Activated CD4-positive, alpha-beta T cell treated with anti-CD3 and anti-CD28 coated beads for 36 hours (primary cell): ENCODE measurements at regions of chr1 and their contacts with region 1.

Region 1: DNA sequence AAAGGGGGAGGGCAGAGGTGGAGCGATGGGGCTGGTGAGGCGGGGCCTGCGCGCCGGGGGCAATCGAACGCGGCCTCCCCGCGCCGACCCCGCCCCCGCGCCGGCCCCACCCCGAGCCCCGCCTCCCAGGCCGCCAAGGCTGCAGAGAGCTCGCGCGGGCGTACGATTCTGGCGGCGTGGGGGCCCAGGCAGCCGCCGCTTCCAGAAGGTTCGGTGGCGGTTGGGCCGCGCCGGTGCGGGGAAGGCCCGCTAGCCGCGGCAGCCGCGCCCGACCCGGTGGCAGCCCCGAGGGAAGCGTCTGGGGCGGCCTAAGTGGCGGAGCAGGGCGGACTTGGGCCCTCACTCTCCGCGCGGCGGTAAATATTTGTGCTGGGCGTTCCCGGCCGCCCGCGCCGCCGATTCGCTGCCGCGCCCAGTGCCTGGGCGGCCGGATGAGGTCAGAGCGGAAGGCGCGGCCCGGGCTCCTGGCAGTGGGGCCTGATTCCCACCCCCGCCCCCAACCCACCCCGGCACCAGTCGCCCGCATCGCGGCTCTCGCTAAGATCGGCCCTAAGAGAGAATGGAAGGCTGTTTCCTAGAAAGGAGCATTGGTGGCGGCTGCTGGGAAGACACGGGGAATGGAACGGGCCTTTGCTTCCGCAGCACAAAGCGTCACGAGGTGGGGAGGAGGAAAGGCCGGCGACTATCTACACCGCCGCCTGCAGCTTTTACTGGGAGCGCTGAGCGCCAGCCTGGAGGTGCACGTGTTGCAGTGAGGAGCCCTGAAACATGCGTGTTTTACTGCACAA is at the start of gene ACOT7:
- DNase-seq: peak; percentile 97
- ATAC-seq: peak; percentile 91
- H3K4me3 Mint-ChIP-seq: peak within 1 kb of the TSS; percentile 83
- H3K27ac Mint-ChIP-seq: peak within 1 kb of the TSS; percentile 95
- H3K4me1 Mint-ChIP-seq: peaks cover 28% of the 10 kb centered on the region
- H3K27me3 Mint-ChIP-seq: no peaks in the 10 kb centered on the region
- total RNA-seq, gene ACOT7: 93.8 to 99.2 TPM

Region 2: DNA sequence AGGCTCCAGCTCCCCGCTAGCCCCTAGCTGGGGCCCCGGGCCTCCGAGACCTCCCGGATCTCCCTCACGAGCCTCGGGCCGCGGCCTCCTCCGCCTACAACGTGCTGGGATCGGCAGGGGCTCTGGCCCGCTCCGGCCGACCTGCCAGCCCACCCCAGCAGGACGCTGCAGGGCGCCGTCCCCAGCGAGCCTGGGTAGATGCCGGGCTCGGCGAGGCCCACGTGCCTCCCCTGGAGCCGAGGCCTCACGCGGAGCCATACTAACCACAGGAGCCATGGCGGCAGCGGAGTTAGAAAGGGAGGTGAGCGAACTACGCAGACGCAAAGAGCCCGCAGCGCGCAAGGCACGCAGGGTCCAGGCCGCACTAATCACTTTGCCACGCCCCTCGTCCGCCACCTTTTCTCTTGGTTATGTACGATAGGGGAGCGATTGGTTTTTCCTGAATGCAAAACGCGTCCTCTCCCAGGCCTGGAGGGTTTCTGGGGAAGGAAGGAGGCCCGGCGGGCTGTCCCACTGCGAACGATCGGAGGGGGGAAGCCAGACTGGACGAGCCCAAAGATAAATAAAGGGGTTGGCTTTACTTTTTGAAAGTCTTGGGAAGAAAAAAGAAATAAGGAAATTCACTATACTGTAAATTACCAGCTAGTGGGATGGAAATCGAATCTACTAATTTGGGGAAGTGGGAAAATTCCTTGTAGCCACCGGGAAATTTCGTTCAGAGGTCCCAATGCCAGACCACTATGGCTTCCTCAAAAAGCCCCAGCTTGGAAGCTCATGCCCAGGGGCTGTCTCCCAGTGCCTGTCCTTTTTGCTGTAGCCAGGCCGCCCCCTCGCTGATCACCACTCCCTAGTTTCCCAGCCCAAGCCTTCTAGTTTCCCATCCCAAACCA is 194.1 kb before region 1 on chr1 and contains the start of gene RPL22:
- CTCF ChIA-PET with region 1: no interaction called
- POLR2A ChIA-PET with region 1: no interaction called
- intact Hi-C with region 1: loop called in 1 of 2 experiments (anchors 1 kb)
- DNase-seq: peak; percentile 99
- ATAC-seq: peak; percentile 99
- H3K4me3 Mint-ChIP-seq: peak within 1 kb of the TSS; percentile 99
- H3K27ac Mint-ChIP-seq: peak within 1 kb of the TSS; percentile 96
- H3K4me1 Mint-ChIP-seq: peaks cover 39% of the 10 kb centered on the region
- H3K27me3 Mint-ChIP-seq: no peaks in the 10 kb centered on the region
- total RNA-seq, gene RPL22: 392 to 475 TPM

Region 3: GRCh38 chr1:6259491-6260425 is 133.8 kb before region 1 on chr1:
- CTCF ChIA-PET with region 1: no interaction called
- POLR2A ChIA-PET with region 1: no interaction called
- intact Hi-C with region 1: loop called in 1 of 2 experiments (anchors 1 kb)
- DNase-seq: peak; percentile 86
- ATAC-seq: peak; percentile 53
- H3K4me3 Mint-ChIP-seq: no peak overlapping the region
- H3K27ac Mint-ChIP-seq: no peak overlapping the region
- H3K4me1 Mint-ChIP-seq: peaks cover 3% of the 10 kb centered on the region
- H3K27me3 Mint-ChIP-seq: peaks cover 3% of the 10 kb centered on the region

Region 4: GRCh38 chr1:6365047-6365446 is 28.5 kb before region 1 on chr1:
- CTCF ChIA-PET with region 1: interaction called, 5 read pairs
- POLR2A ChIA-PET with region 1: no interaction called
- intact Hi-C with region 1: loop called in 1 of 2 experiments (anchors 1 kb)
- DNase-seq: peak; percentile 68
- ATAC-seq: peak; percentile 98
- H3K4me3 Mint-ChIP-seq: peak overlapping the region; percentile 1
- H3K27ac Mint-ChIP-seq: peak overlapping the region; percentile 64
- H3K4me1 Mint-ChIP-seq: peaks cover 38% of the 10 kb centered on the region
- H3K27me3 Mint-ChIP-seq: no peaks in the 10 kb centered on the region

Region 5: DNA sequence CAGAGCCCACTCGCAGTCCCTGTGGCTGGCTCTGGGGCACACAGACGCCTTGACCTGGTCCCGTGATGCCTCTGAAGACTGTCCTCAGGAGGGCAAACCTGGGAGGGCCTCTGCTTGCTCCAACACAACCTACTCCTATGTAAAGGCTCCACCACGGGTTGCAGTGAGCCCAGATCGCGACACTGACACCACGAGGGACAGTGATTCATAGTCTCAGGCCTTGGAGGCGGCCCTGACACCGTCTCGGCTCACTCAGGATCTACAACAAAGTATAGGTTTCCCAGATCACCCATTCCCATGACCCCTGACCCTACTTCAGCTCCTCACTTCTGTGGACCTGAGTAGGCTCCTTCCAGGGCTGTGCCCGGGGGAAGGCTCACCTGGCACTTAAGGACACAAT is 132.7 kb after region 1 on chr1:
- CTCF ChIA-PET with region 1: no interaction called
- POLR2A ChIA-PET with region 1: no interaction called
- intact Hi-C with region 1: no loop called
- DNase-seq: no peak
- ATAC-seq: no peak
- H3K4me3 Mint-ChIP-seq: no peak overlapping the region
- H3K27ac Mint-ChIP-seq: no peak overlapping the region
- H3K4me1 Mint-ChIP-seq: no peaks in the 10 kb centered on the region
- H3K27me3 Mint-ChIP-seq: no peaks in the 10 kb centered on the region

Region 6: GRCh38 chr1:6554031-6554906 is 160.7 kb after region 1 on chr1 and contains the start of gene NOL9:
- CTCF ChIA-PET with region 1: no interaction called
- POLR2A ChIA-PET with region 1: no interaction called
- intact Hi-C with region 1: loop called in 1 of 2 experiments (anchors 2 kb)
- DNase-seq: peak; percentile 97
- ATAC-seq: peak; percentile 98
- H3K4me3 Mint-ChIP-seq: peak within 1 kb of the TSS; percentile 82
- H3K27ac Mint-ChIP-seq: peak within 1 kb of the TSS; percentile 55
- H3K4me1 Mint-ChIP-seq: peaks cover 19% of the 10 kb centered on the region
- H3K27me3 Mint-ChIP-seq: no peaks in the 10 kb centered on the region
- total RNA-seq, gene NOL9: 37.4 to 44.7 TPM

Region 7: DNA sequence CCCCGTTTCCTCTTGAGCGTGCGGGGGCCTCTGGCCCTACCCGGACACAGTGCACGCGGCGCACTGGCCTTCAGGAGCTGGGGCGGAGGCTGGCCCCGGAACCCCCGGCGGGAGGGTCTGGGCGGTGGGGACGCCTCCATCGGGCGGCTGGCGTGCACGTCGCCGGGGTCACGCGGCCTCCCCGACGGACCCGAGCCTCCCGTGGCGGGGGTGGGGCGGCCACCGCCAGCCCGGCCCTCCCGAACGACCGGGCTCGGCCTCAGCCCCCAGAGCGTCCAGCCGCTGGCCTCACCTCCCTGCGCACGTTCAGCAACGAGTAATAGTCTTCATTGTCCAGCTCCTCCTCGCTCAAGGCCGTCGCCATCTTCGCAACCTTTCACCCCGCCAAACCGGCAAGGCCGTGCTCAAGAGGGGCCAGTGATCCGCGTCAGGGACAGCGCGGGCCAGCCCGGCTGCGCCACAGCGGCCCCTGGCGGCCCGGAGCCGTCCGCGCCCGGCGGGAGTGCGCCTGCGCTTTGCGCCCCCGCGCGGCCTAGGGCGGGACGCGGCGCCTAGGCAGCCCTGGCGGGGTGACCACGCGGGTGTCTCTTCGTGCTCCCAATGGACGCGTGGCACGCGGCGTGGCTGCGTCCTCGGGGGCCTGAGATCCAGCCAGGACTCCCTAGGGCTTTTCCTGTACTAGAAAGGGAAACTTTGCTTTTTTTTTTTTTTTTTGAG is 308.0 kb after region 1 on chr1 and contains the start of gene DNAJC11:
- CTCF ChIA-PET with region 1: no interaction called
- POLR2A ChIA-PET with region 1: no interaction called
- intact Hi-C with region 1: loop called in 1 of 2 experiments (anchors 1 kb)
- DNase-seq: peak; percentile 93
- ATAC-seq: peak; percentile 98
- H3K4me3 Mint-ChIP-seq: peak within 1 kb of the TSS; percentile 90
- H3K27ac Mint-ChIP-seq: peak within 1 kb of the TSS; percentile 92
- H3K4me1 Mint-ChIP-seq: peaks cover 28% of the 10 kb centered on the region
- H3K27me3 Mint-ChIP-seq: no peaks in the 10 kb centered on the region
- total RNA-seq, gene DNAJC11: 53.2 to 62.0 TPM